ENCODE measurements at regions of chr4 and their contacts with region 1.

Region 1: GRCh38 chr4:25030277-25031076 is at the start of gene LGI2:
- DNase-seq: peak; percentile 73
- ATAC-seq: peak; percentile 58
- total RNA-seq, gene LGI2: 3.6 TPM

Region 2: DNA sequence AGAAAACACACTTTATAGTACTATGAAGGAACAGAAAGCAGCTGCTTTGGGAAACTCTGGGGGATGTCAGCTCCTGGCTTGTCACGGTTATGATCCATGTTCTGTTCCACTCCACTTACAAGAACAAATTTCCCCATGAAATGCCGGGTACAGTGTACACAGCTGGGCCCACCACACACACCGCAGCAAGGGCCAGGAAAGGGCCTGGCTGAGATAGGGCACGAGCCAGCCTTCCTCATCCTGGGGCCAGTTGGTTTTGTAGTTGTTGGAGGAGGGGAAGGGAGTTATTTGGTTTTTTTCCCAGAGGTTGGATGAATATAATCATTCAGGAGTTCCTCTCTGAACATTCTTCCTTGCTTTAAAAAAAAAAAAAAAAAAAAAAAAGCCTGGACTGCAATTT is 72.9 kb after region 1 on chr4:
- intact Hi-C with region 1: loop called (anchors 5 kb)
- DNase-seq: no peak
- ATAC-seq: peak; percentile 70